GM12878 (cell line): ENCODE measurements at regions of chr1 and their contacts with region 1.

Region 1: DNA sequence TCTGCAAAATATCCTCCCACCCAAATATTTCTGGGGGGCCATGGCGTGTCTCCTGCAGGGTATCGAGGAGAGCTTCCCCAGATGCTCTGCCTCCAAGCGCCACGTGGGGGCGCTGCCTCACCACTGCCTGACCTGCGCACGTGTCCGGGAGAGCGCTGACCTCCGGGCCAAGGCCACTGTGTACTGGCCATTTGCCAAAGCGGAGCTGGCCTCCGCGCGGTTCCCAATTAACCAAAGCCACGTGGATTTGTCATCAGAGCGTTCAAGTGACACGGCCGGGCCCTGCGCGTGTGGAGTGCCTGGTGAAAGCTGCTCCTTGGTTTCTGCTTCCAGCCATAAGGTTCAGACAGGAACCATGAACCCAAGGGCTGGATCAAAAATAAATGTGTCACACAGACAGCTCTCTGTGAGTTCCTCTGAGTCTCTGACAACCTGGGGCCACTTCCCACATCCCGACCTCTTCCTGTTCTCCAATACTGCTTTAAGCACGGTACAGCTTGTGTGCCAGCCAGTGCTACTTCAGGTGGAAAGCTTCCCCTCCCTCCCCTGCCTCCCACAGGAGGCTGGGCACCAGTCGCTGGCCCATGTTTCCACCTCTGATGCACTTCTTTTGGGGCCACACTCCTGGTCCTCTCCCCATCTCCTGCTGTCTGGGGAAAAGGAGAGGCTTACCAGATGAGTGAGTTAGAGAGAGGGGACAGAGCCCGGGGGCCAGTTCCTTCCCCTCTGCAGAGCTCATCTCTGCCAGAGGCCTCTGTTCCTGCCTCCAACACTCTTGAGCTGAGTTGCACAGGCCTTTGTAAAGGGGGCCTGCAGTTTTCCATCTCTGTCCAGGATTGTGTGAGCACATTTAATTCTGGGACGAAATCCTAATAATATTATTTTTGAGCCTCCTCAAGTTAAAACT is 26.1 kb downstream of the ZP4 start:
- DNase-seq: peak; percentile 5
- ATAC-seq: peak; percentile 93
- H3K4me3 ChIP-seq: no peak overlapping the region
- H3K27ac ChIP-seq: no peak overlapping the region
- H3K4me1 ChIP-seq: no peaks in the 10 kb centered on the region
- H3K27me3 ChIP-seq: no peaks in the 10 kb centered on the region
- CTCF ChIP-seq: peak; percentile 64 to 96 (median 85); a peak in 5 of 6 replicates
- EP300 ChIP-seq: no peak
- POLR2A ChIP-seq: no peak
- RAD21 ChIP-seq: peak; percentile 73

Region 2: DNA sequence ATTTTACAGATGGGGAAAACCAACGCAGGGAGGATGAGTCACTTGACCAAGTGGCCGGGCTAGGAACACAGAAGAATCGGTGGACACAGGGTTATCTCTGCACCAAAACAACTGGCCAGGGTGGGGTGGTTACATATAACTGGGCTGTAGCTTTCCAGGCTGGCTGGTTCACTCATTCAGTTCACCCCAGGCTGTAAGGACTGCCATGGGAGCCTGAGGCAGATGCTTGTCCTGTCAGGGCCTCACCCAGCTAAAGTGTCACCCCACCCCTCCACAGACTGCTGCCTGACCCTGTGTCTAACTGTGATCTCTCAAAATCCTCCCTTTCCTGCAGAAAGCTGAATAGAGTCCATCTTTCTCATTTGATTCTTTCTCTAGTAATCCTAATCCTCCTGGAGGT is 435.3 kb before region 1 on chr1:
- CTCF ChIA-PET with region 1: no interaction called
- POLR2A ChIA-PET with region 1: no interaction called
- RAD21 ChIA-PET with region 1: no interaction called
- SMC1A ChIA-PET with region 1: no interaction called
- in situ Hi-C with region 1: no loop called
- intact Hi-C with region 1: no loop called
- DNase-seq: no peak
- ATAC-seq: no peak
- H3K4me3 ChIP-seq: no peak overlapping the region
- H3K27ac ChIP-seq: no peak overlapping the region
- H3K4me1 ChIP-seq: no peaks in the 10 kb centered on the region
- H3K27me3 ChIP-seq: no peaks in the 10 kb centered on the region
- CTCF ChIP-seq: no peak
- EP300 ChIP-seq: no peak
- POLR2A ChIP-seq: no peak
- RAD21 ChIP-seq: no peak

Region 3: GRCh38 chr1:237809099-237809498 is 55.5 kb before region 1 on chr1:
- CTCF ChIA-PET with region 1: interaction called, 18 read pairs
- POLR2A ChIA-PET with region 1: no interaction called
- RAD21 ChIA-PET with region 1: no interaction called
- SMC1A ChIA-PET with region 1: no interaction called
- in situ Hi-C with region 1: no loop called
- intact Hi-C with region 1: no loop called
- DNase-seq: no peak
- ATAC-seq: no peak
- H3K4me3 ChIP-seq: no peak overlapping the region
- H3K27ac ChIP-seq: no peak overlapping the region
- H3K4me1 ChIP-seq: no peaks in the 10 kb centered on the region
- H3K27me3 ChIP-seq: no peaks in the 10 kb centered on the region
- CTCF ChIP-seq: no peak
- EP300 ChIP-seq: no peak
- POLR2A ChIP-seq: no peak
- RAD21 ChIP-seq: no peak

Region 4: GRCh38 chr1:237879195-237879594 is 14.6 kb after region 1 on chr1:
- CTCF ChIA-PET with region 1: interaction called, 27 read pairs
- POLR2A ChIA-PET with region 1: no interaction called
- RAD21 ChIA-PET with region 1: interaction called, 10 read pairs
- SMC1A ChIA-PET with region 1: interaction called, 7 read pairs
- in situ Hi-C with region 1: no loop called
- intact Hi-C with region 1: no loop called
- DNase-seq: no peak
- ATAC-seq: peak; percentile 73
- H3K4me3 ChIP-seq: no peak overlapping the region
- H3K27ac ChIP-seq: no peak overlapping the region
- H3K4me1 ChIP-seq: no peaks in the 10 kb centered on the region
- H3K27me3 ChIP-seq: no peaks in the 10 kb centered on the region
- CTCF ChIP-seq: no peak
- EP300 ChIP-seq: no peak
- POLR2A ChIP-seq: no peak
- RAD21 ChIP-seq: no peak

Region 5: GRCh38 chr1:238052496-238053266 is 188.1 kb after region 1 on chr1:
- CTCF ChIA-PET with region 1: no interaction called
- POLR2A ChIA-PET with region 1: no interaction called
- RAD21 ChIA-PET with region 1: no interaction called
- SMC1A ChIA-PET with region 1: no interaction called
- in situ Hi-C with region 1: no loop called
- intact Hi-C with region 1: no loop called
- DNase-seq: no peak
- ATAC-seq: no peak
- H3K4me3 ChIP-seq: no peak overlapping the region
- H3K27ac ChIP-seq: no peak overlapping the region
- H3K4me1 ChIP-seq: no peaks in the 10 kb centered on the region
- H3K27me3 ChIP-seq: no peaks in the 10 kb centered on the region
- CTCF ChIP-seq: no peak
- EP300 ChIP-seq: no peak
- POLR2A ChIP-seq: no peak
- RAD21 ChIP-seq: no peak

Region 6: GRCh38 chr1:238239343-238239742 is 374.8 kb after region 1 on chr1:
- CTCF ChIA-PET with region 1: interaction called, 45 read pairs
- POLR2A ChIA-PET with region 1: no interaction called
- RAD21 ChIA-PET with region 1: interaction called, 3 read pairs
- SMC1A ChIA-PET with region 1: interaction called, 29 read pairs
- in situ Hi-C with region 1: no loop called
- intact Hi-C with region 1: loop called (anchors 2 kb)
- DNase-seq: no peak
- ATAC-seq: peak; percentile 79
- H3K4me3 ChIP-seq: no peak overlapping the region
- H3K27ac ChIP-seq: no peak overlapping the region
- H3K4me1 ChIP-seq: no peaks in the 10 kb centered on the region
- H3K27me3 ChIP-seq: no peaks in the 10 kb centered on the region
- CTCF ChIP-seq: no peak
- EP300 ChIP-seq: no peak
- POLR2A ChIP-seq: no peak
- RAD21 ChIP-seq: no peak

Region 7: DNA sequence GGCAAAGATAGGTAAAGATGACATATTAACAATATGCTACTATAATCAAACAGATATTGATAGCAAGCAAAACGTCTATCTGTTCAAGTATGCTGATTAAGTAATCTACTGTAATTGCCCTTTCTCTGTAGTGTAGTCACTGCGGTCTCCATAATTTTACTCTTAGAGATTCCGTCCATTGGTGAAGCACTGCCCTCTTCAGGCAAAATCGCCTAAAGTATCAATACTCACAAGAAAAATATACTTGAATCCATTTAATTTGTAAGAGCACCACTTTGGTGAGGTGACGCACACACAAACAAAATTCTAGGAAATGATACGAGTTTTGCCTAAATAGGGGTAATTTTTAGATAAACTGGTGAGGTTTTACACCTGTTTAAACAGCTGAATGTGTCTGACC is 1087.2 kb after region 1 on chr1:
- CTCF ChIA-PET with region 1: interaction called, 23 read pairs
- POLR2A ChIA-PET with region 1: no interaction called
- RAD21 ChIA-PET with region 1: interaction called, 4 read pairs
- SMC1A ChIA-PET with region 1: interaction called, 7 read pairs
- in situ Hi-C with region 1: no loop called
- intact Hi-C with region 1: no loop called
- DNase-seq: no peak
- ATAC-seq: peak; percentile 67
- H3K4me3 ChIP-seq: no peak overlapping the region
- H3K27ac ChIP-seq: no peak overlapping the region
- H3K4me1 ChIP-seq: no peaks in the 10 kb centered on the region
- H3K27me3 ChIP-seq: no peaks in the 10 kb centered on the region
- CTCF ChIP-seq: no peak; a peak in 1 of 6 replicates
- EP300 ChIP-seq: no peak
- POLR2A ChIP-seq: no peak
- RAD21 ChIP-seq: peak; percentile 30; the same call in 1 of the 2 replicates